Heart left ventricle (tissue), 16 donors: ENCODE measurements at regions of chr5 and their contacts with region 1.

Region 1: GRCh38 chr5:135332519-135333150 is 66.4 kb downstream of the MACROH2A1 start:
- DNase-seq: no peak
- ATAC-seq: peak in 1 of 4 donors; percentile 7
- H3K4me3 ChIP-seq: no peak overlapping the region
- H3K27ac ChIP-seq: no peak overlapping the region
- H3K4me1 ChIP-seq: peaks cover 0 to 19% (median 2%) of the 10 kb centered on the region in 12 donors
- H3K27me3 ChIP-seq: no peaks in the 10 kb centered on the region
- CTCF ChIP-seq: peak in 11 of 12 donors; percentile 18 to 59 (median 45)
- POLR2A ChIP-seq: no peak

Region 2: GRCh38 chr5:135174315-135175096 is 158.1 kb before region 1 on chr5:
- intact Hi-C with region 1: no loop called
- DNase-seq: no peak
- ATAC-seq: no peak
- H3K4me3 ChIP-seq: no peak overlapping the region
- H3K27ac ChIP-seq: no peak overlapping the region
- H3K4me1 ChIP-seq: no peaks in the 10 kb centered on the region
- H3K27me3 ChIP-seq: peaks cover 0 to 40% (median 8%) of the 10 kb centered on the region in 9 donors
- CTCF ChIP-seq: no peak
- POLR2A ChIP-seq: no peak

Region 3: GRCh38 chr5:135208903-135209721 is 123.5 kb before region 1 on chr5:
- intact Hi-C with region 1: loop called in 1 of 10 experiments (anchors 10 kb)
- DNase-seq: no peak
- ATAC-seq: no peak
- H3K4me3 ChIP-seq: no peak overlapping the region
- H3K27ac ChIP-seq: peak overlapping the region in 1 of 12 donors; percentile 25
- H3K4me1 ChIP-seq: peaks cover 0 to 11% (median 0%) of the 10 kb centered on the region in 12 donors
- H3K27me3 ChIP-seq: no peaks in the 10 kb centered on the region
- CTCF ChIP-seq: no peak
- POLR2A ChIP-seq: no peak

Region 4: DNA sequence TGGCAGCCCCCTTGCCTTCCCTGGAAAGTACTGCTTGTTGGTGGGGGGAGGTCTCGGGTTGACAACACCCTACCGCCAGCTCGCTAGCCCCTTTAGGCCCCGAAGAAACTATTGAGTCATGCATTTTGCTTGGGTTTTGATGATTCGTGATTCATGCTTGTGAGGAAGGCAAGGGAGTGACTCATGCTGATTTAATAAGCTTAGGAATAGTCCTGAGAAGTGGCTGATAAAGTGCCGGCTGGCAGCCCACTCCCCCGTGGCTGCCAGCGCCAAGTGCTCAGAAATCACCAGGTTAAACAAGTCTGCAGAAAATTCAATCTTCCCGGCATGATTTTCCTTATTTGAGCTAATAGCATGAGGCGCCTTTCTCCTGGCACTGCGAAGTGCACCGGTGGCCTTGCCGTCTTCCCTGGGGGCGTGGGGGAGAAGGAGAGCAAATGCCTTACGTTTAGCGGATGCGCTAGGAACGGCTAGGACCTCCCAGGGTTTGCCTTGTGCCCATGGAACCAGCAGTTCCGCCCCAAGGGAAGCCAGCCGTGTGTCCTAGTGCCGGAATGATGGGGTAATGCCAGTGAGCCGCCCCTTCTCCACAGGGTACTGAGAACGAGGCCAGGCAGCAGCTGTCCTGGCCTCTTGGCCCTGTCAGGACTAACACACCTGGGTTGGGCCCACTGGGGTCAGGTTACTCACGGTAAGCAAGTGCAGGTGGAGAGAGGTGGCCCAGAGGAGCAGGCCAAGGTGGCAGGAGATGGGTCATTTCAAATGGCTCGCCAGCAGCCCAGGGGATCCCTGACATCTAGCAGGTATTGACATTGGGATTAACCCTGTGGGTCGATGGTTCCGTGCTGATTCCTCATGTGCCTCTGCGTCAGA is 85.5 kb before region 1 on chr5:
- intact Hi-C with region 1: loop called in 1 of 10 experiments (anchors 10 kb)
- DNase-seq: no peak
- ATAC-seq: peak in 1 of 4 donors; percentile 23
- H3K4me3 ChIP-seq: no peak overlapping the region
- H3K27ac ChIP-seq: no peak overlapping the region
- H3K4me1 ChIP-seq: peaks cover 0 to 31% (median 14%) of the 10 kb centered on the region in 12 donors
- H3K27me3 ChIP-seq: no peaks in the 10 kb centered on the region
- CTCF ChIP-seq: no peak
- POLR2A ChIP-seq: no peak